Activated B cell treated with CpG ODN at 0.5 μM for 24 hours (primary cell): ENCODE measurements at regions of chr10 and their contacts with region 1.

Region 1: DNA sequence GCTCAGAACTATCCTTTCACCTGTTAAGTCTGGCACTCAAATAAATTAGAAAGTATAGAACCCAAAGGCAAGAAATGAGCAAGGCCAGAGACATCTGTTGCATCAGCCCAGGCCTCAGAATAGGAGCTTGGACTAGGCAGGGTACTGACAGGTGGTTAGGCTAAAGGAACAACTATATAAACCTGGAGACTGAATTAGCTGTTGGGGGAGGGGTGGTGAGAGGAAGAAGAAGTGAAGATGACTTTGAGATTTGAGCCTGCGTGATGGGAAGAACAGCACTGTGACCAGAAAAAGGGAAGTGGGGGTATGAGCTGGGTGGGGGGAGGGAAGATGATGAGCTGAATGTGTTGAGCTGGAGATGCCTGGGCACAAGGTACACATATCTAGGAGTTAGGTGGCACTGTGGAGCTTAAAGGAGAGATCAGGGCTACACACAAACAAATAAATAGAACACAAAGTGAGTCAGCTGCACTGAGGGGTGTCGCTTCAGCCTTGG is 244.7 kb downstream of the PTEN start:
- DNase-seq: no peak
- ATAC-seq: peak; percentile 72
- H3K4me3 Mint-ChIP-seq: peak overlapping the region; percentile 55
- H3K27ac Mint-ChIP-seq: peak overlapping the region; percentile 95
- H3K4me1 Mint-ChIP-seq: peaks cover 58% of the 10 kb centered on the region
- H3K27me3 Mint-ChIP-seq: no peaks in the 10 kb centered on the region
- CTCF ChIP-seq: no peak

Region 2: GRCh38 chr10:88027570-88027969 is 80.6 kb before region 1 on chr10:
- CTCF ChIA-PET with region 1: interaction called, 3 read pairs
- POLR2A ChIA-PET with region 1: interaction called, 3 read pairs
- intact Hi-C with region 1: loop called (anchors 1 kb)
- DNase-seq: no peak
- ATAC-seq: peak; percentile 77
- H3K4me3 Mint-ChIP-seq: peak overlapping the region; percentile 39
- H3K27ac Mint-ChIP-seq: peak overlapping the region; percentile 81
- H3K4me1 Mint-ChIP-seq: peaks cover 24% of the 10 kb centered on the region
- H3K27me3 Mint-ChIP-seq: no peaks in the 10 kb centered on the region
- CTCF ChIP-seq: no peak

Region 3: DNA sequence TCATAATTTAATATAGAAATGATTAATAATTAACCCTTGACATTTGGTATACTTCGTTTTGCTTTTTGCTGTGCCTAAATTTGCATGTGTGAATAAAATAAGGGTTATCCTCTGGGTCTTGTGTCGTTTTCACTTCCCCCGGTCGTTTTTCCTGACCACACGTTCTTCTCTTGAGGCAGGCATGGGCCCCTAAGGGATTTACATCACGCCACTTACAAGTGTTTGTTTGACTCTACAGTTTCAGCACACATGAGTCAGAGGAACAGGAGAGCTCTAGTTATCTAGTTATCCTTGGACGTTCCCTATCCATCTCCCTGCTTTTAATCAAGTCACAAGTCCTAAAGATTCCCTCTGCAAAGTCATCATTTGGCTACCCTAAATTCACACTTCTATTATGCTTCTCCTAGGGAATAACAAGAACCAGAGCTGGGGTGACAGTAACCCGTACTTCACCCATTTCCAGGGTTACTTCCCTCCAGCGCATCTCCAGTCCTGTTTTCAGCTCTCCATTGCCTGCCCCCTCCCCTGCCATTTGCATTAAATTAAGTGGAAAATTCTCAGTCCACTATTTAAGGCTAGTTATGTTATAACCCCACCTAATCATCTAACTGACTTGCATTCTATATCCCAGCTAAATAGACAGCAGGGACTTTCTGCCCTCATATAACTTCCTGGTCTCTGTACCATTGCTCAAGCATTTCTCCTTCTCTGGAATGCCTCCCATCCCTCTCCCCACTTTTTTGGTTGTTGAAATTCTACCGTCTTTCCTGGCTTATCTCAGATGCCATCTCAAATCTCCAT is 37.9 kb before region 1 on chr10:
- CTCF ChIA-PET with region 1: interaction called, 13 read pairs
- POLR2A ChIA-PET with region 1: interaction called, 72 read pairs
- intact Hi-C with region 1: loop called (anchors 1 kb)
- DNase-seq: no peak
- ATAC-seq: peak; percentile 81
- H3K4me3 Mint-ChIP-seq: peak overlapping the region; percentile 69
- H3K27ac Mint-ChIP-seq: peak overlapping the region; percentile 91
- H3K4me1 Mint-ChIP-seq: peaks cover 84% of the 10 kb centered on the region
- H3K27me3 Mint-ChIP-seq: no peaks in the 10 kb centered on the region
- CTCF ChIP-seq: no peak

Region 4: GRCh38 chr10:88091490-88092105 is 16.6 kb before region 1 on chr10:
- CTCF ChIA-PET with region 1: interaction called, 18 read pairs
- POLR2A ChIA-PET with region 1: interaction called, 42 read pairs
- intact Hi-C with region 1: loop called (anchors 1 kb)
- DNase-seq: no peak
- ATAC-seq: peak; percentile 87
- H3K4me3 Mint-ChIP-seq: peak overlapping the region; percentile 11
- H3K27ac Mint-ChIP-seq: peak overlapping the region; percentile 81
- H3K4me1 Mint-ChIP-seq: peaks cover 37% of the 10 kb centered on the region
- H3K27me3 Mint-ChIP-seq: no peaks in the 10 kb centered on the region
- CTCF ChIP-seq: no peak

Region 5: GRCh38 chr10:88330174-88330573 is 222.0 kb after region 1 on chr10:
- CTCF ChIA-PET with region 1: no interaction called
- POLR2A ChIA-PET with region 1: no interaction called
- intact Hi-C with region 1: loop called (anchors 5 kb)
- DNase-seq: no peak
- ATAC-seq: no peak
- H3K4me3 Mint-ChIP-seq: no peak overlapping the region
- H3K27ac Mint-ChIP-seq: no peak overlapping the region
- H3K4me1 Mint-ChIP-seq: peaks cover 45% of the 10 kb centered on the region
- H3K27me3 Mint-ChIP-seq: no peaks in the 10 kb centered on the region
- CTCF ChIP-seq: no peak

Region 6: GRCh38 chr10:88428442-88428841 is 320.3 kb after region 1 on chr10:
- CTCF ChIA-PET with region 1: no interaction called
- POLR2A ChIA-PET with region 1: no interaction called
- intact Hi-C with region 1: no loop called
- DNase-seq: no peak
- ATAC-seq: no peak
- H3K4me3 Mint-ChIP-seq: no peak overlapping the region
- H3K27ac Mint-ChIP-seq: no peak overlapping the region
- H3K4me1 Mint-ChIP-seq: no peaks in the 10 kb centered on the region
- H3K27me3 Mint-ChIP-seq: no peaks in the 10 kb centered on the region
- CTCF ChIP-seq: no peak